PC-9 (cell line): ENCODE measurements at regions of chr2 and their contacts with region 1.

Region 1: GRCh38 chr2:168961450-168962229 is 60.5 kb downstream of the G6PC2 start:
- DNase-seq: peak; percentile 17 to 63
- H3K4me3 ChIP-seq: no peak overlapping the region
- H3K27ac ChIP-seq: no peak overlapping the region
- H3K4me1 ChIP-seq: peaks cover 36% of the 10 kb centered on the region
- H3K27me3 ChIP-seq: no peaks in the 10 kb centered on the region
- CTCF ChIP-seq: peak; percentile 85

Region 2: DNA sequence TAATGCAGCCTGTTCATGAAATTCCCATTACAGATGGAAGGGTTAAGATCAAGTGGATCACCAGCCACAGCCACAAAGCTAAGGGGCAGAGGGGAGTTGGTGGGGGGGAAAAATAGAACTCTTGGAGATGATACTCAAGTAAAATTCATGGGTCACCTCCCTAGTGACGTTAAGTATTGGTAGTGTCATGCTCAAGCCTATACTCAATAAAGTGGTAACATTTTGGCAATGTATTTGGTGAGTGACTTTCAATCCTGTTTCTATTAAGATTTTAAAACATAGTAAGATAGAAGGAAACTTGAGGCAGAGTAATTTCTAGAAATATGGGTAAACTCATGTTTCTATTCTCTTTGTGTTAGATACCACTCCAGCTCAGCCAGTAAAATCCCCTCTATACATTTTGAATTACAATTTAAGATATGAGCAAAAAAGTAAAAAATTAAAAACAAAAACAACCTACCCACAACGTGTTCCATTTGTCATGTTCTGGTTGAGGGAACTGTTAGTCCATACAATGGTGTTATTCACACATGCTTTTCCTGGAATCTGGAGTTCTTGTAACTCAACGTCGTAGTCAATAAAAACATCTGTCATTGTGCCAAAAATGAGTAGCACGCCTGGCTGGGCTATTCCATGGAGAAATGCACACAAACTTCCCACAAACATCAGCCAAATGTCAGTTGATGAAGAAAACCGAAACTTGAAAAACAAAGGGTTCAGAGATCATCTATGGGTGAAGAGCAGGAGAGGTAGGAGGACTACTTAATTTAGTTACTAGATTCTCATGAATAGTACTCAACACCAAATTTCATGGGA is 51.4 kb after region 1 on chr2:
- CTCF ChIA-PET with region 1: interaction called, 6 read pairs
- POLR2A ChIA-PET with region 1: no interaction called
- intact Hi-C with region 1: loop called (anchors 1 kb)
- DNase-seq: no peak
- H3K4me3 ChIP-seq: no peak overlapping the region
- H3K27ac ChIP-seq: peak overlapping the region; percentile 81
- H3K4me1 ChIP-seq: peaks cover 17% of the 10 kb centered on the region
- H3K27me3 ChIP-seq: no peaks in the 10 kb centered on the region
- CTCF ChIP-seq: no peak

Region 3: GRCh38 chr2:169095621-169096105 is 134.0 kb after region 1 on chr2:
- CTCF ChIA-PET with region 1: no interaction called
- POLR2A ChIA-PET with region 1: no interaction called
- intact Hi-C with region 1: loop called (anchors 1 kb)
- DNase-seq: peak; percentile 50 to 92
- H3K4me3 ChIP-seq: peak overlapping the region; percentile 37; the same call in 1 of the 2 replicates
- H3K27ac ChIP-seq: peak overlapping the region; percentile 55
- H3K4me1 ChIP-seq: peaks cover 55% of the 10 kb centered on the region
- H3K27me3 ChIP-seq: no peaks in the 10 kb centered on the region
- CTCF ChIP-seq: no peak

Region 4: GRCh38 chr2:169131587-169132512 is 170.2 kb after region 1 on chr2:
- CTCF ChIA-PET with region 1: interaction called, 4 read pairs
- POLR2A ChIA-PET with region 1: interaction called, 4 read pairs
- intact Hi-C with region 1: loop called (anchors 1 kb)
- DNase-seq: no peak
- H3K4me3 ChIP-seq: no peak overlapping the region
- H3K27ac ChIP-seq: no peak overlapping the region
- H3K4me1 ChIP-seq: no peaks in the 10 kb centered on the region
- H3K27me3 ChIP-seq: no peaks in the 10 kb centered on the region
- CTCF ChIP-seq: peak; percentile 84

Region 5: GRCh38 chr2:169221745-169222369 is 260.2 kb after region 1 on chr2:
- CTCF ChIA-PET with region 1: no interaction called
- POLR2A ChIA-PET with region 1: no interaction called
- intact Hi-C with region 1: loop called (anchors 5 kb)
- DNase-seq: no peak
- H3K4me3 ChIP-seq: no peak overlapping the region
- H3K27ac ChIP-seq: no peak overlapping the region
- H3K4me1 ChIP-seq: no peaks in the 10 kb centered on the region
- H3K27me3 ChIP-seq: no peaks in the 10 kb centered on the region
- CTCF ChIP-seq: peak; percentile 63